ENCODE measurements at regions of chr6 and their contacts with region 1.

Region 1: GRCh38 chr6:138115877-138116660 is 8.8 kb upstream of the PERP start:
- DNase-seq: peak; percentile 57
- H3K4me3 Mint-ChIP-seq: no peak overlapping the region
- H3K27ac Mint-ChIP-seq: no peak overlapping the region
- H3K4me1 Mint-ChIP-seq: peaks cover 11% of the 10 kb centered on the region
- H3K27me3 Mint-ChIP-seq: peaks cover 32% of the 10 kb centered on the region

Region 2: DNA sequence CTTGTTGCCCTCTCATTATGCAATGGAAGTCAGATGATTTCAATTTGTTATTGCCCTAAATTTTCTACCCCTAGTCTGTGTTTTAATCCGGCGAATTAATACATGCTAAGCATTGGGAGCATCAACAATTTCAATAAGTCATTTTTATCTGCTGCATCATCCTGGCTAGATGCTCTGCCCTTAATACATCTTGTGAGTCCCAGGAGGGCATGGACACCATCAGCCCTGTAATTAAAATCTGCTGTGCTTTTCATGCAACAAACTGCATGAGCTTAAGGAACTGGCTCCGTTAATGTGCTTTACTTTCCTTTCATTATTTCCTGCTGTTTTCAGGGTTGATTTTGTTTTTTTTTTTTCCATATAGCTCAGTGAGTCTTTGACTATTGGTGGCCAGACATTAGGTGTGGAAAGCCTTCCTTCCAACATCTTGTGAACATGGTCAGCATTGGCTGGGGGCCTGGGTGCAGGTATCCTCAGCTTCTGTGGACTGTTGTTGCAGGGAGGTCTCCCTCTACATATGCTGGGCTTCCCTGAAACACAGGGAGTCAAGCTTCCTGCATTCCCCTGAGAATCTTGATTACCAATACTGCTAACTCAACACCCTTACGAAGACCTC is 110.7 kb after region 1 on chr6:
- CTCF ChIA-PET with region 1: no interaction called
- DNase-seq: no peak
- H3K4me3 Mint-ChIP-seq: no peak overlapping the region
- H3K27ac Mint-ChIP-seq: no peak overlapping the region
- H3K4me1 Mint-ChIP-seq: no peaks in the 10 kb centered on the region
- H3K27me3 Mint-ChIP-seq: peaks cover 13% of the 10 kb centered on the region

Region 3: DNA sequence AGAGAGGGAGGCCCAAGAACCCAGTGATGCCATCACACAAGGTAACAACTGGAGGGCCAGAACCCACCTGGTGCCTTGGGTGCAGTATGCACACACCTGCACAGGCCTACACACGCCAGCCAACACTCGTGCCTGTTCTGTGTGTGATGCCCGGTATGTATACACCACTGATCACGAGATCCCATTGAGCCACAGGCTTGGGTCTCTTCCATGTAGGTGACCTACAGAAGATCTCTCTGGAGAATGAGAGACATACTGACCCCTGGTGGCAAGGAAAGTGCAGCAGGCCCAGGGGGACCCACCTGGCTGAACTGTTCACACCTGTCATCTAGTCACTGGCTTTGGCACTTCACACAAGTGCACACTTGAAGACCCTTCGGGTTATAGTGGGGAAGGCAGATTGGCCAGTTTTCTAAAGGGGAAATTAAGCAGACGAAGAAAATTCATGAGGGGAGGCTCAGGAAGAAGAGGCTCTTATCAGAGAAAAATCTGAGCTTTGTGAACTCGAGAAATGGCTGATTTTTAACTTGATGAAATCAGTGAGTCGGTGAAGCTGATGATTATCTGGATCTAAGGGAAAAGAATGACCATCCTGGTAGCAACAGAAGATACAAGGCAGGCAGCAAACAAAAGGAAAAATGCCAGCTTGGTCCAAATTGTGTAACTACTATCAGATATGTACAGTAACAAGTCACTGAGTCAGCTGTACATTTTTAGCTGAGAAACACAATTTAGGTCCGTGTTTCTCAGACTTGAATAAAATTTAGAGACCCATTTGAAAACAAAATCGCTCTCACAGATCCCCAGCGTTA is 171.3 kb after region 1 on chr6:
- CTCF ChIA-PET with region 1: interaction called, 19 read pairs
- DNase-seq: peak; percentile 67
- H3K4me3 Mint-ChIP-seq: no peak overlapping the region
- H3K27ac Mint-ChIP-seq: no peak overlapping the region
- H3K4me1 Mint-ChIP-seq: no peaks in the 10 kb centered on the region
- H3K27me3 Mint-ChIP-seq: no peaks in the 10 kb centered on the region

Region 4: DNA sequence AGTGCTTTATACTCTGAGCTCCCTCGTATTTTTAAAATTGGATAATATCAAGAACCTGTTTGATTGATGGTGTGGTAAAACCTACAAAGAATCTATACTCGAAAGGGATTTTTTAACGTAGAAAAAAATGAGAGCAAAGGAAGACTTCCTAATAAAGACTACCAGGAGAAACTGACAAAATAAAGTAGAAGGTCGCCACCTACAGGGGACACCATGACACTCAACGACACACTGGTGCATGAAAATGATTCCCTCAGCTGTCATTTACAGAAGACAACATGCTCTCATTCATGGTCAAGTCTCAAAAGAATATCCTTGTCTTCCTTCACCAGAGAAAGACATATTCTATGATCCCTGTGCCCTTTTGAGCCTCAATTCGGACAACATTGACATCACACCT is 393.3 kb after region 1 on chr6:
- CTCF ChIA-PET with region 1: interaction called, 20 read pairs
- DNase-seq: peak; percentile 70
- H3K4me3 Mint-ChIP-seq: no peak overlapping the region
- H3K27ac Mint-ChIP-seq: no peak overlapping the region
- H3K4me1 Mint-ChIP-seq: peaks cover 6% of the 10 kb centered on the region
- H3K27me3 Mint-ChIP-seq: peaks cover 4% of the 10 kb centered on the region

Region 5: GRCh38 chr6:138517635-138518034 is 401.6 kb after region 1 on chr6:
- CTCF ChIA-PET with region 1: interaction called, 44 read pairs
- DNase-seq: peak; percentile 74
- H3K4me3 Mint-ChIP-seq: no peak overlapping the region
- H3K27ac Mint-ChIP-seq: no peak overlapping the region
- H3K4me1 Mint-ChIP-seq: peaks cover 22% of the 10 kb centered on the region
- H3K27me3 Mint-ChIP-seq: peaks cover 3% of the 10 kb centered on the region

Measured in activated naive CD4-positive, alpha-beta T cell treated with anti-CD3 and anti-CD28 coated beads, Interleukin-2, amount 10 ng/mL, durations not matched to agents 7 days and 5 days (primary cell).